RWPE1 (cell line): ENCODE measurements at regions of chr5 and their contacts with region 1.

Region 1: GRCh38 chr5:177113566-177114424 is 19.8 kb upstream of the NSD1 start:
- DNase-seq: peak; percentile 94
- H3K27ac ChIP-seq: no peak overlapping the region
- CTCF ChIP-seq: peak; percentile 100

Region 2: DNA sequence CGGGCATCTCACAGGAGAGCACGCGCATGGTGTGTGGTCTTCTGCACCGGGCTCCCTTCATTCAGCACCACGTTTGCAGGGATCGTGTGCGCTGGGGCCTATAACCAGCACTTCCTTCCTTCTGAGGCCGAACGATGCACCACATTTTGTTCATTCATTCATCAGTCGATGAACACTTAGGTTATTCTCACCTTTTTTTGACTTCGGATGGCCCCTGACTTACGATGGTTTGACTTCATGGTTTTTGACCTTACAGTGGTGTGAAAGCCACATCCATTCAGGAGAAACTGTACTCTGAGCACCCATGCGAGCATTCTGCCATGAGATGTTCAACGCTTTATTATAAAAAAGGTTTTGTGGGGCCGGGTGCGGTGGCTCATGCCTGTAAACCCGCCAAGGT is 439.0 kb before region 1 on chr5:
- CTCF ChIA-PET with region 1: no interaction called
- POLR2A ChIA-PET with region 1: no interaction called
- DNase-seq: no peak
- H3K27ac ChIP-seq: no peak overlapping the region
- CTCF ChIP-seq: no peak

Region 3: GRCh38 chr5:177098470-177099141 is 15.2 kb before region 1 on chr5:
- CTCF ChIA-PET with region 1: interaction called, 31 read pairs
- POLR2A ChIA-PET with region 1: no interaction called
- DNase-seq: no peak
- H3K27ac ChIP-seq: no peak overlapping the region
- CTCF ChIP-seq: no peak

Region 4: GRCh38 chr5:177154003-177154643 is 40.3 kb after region 1 on chr5:
- CTCF ChIA-PET with region 1: no interaction called
- POLR2A ChIA-PET with region 1: no interaction called
- DNase-seq: no peak
- H3K27ac ChIP-seq: no peak overlapping the region
- CTCF ChIP-seq: no peak

Region 5: DNA sequence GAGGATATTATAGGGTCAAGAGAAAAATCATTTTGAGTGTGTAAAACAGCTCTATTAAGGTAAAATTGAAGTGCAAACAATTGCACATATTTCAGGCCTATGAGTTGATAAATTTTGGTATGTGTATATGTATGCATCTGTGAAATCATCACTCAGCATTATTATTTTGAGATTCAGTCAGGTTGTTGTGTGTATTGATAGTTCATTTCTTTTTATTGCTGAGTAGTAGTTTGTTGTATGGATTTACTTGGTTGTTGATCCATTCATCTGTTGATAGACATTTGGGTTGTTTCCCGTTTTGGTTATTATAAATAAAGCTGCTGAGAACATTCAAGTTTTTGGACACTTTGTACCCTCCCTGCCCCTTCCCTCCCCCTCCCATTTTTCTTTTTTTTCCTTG is 139.5 kb after region 1 on chr5:
- CTCF ChIA-PET with region 1: no interaction called
- POLR2A ChIA-PET with region 1: no interaction called
- DNase-seq: no peak
- H3K27ac ChIP-seq: no peak overlapping the region
- CTCF ChIP-seq: no peak

Region 6: GRCh38 chr5:177311723-177312648 is 198.2 kb after region 1 on chr5 and contains the start of gene MXD3:
- CTCF ChIA-PET with region 1: interaction called, 12 read pairs
- POLR2A ChIA-PET with region 1: no interaction called
- DNase-seq: peak; percentile 99
- H3K27ac ChIP-seq: peak within 1 kb of the TSS; percentile 84
- CTCF ChIP-seq: no peak

Region 7: GRCh38 chr5:177444101-177445051 is 330.6 kb after region 1 on chr5:
- CTCF ChIA-PET with region 1: no interaction called
- POLR2A ChIA-PET with region 1: no interaction called
- DNase-seq: no peak
- H3K27ac ChIP-seq: peak overlapping the region; percentile 88
- CTCF ChIP-seq: no peak